AG04450 (cell line): ENCODE measurements at regions of chr4 and their contacts with region 1.

Region 1: DNA sequence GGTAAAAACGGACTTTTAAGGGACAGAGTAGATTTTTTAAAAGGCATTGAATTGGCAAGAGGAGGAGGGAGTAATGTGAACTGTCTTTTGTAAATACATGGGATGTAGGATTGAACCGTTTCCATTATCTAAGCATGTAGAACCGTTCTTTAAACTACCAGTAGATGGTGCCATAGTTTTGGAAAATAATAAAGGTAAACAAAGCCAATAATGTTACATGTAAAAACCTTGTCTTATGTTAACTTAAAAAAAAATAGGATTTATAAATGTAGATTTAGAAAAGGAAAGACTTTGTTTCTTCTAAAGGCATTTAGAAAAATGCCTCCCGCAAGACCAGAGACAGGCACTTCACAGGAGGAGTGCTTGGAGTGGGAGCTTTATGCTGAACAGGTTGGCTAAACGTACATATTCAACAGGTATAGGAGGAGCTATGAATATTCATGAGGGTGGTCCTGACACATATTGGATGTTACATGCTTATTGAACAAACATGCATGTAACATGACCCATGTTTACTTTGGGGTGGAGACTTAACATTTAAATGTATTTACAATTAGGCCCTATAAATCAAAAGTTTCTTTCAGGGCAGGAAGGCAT is 45.5 kb upstream of the FAM241A start:
- DNase-seq: peak; percentile 42
- H3K4me3 ChIP-seq: no peak overlapping the region
- H3K27ac ChIP-seq: no peak overlapping the region
- H3K27me3 ChIP-seq: peaks cover 5% of the 10 kb centered on the region
- CTCF ChIP-seq: peak; percentile 66

Region 2: GRCh38 chr4:112141366-112142138 is 41.8 kb after region 1 on chr4:
- CTCF ChIA-PET with region 1: interaction called, 13 read pairs
- POLR2A ChIA-PET with region 1: no interaction called
- DNase-seq: no peak
- H3K4me3 ChIP-seq: no peak overlapping the region
- H3K27ac ChIP-seq: no peak overlapping the region
- H3K27me3 ChIP-seq: no peaks in the 10 kb centered on the region
- CTCF ChIP-seq: no peak

Region 3: GRCh38 chr4:112231779-112232713 is 132.2 kb after region 1 on chr4 and contains the start of gene AP1AR:
- CTCF ChIA-PET with region 1: interaction called, 166 read pairs
- POLR2A ChIA-PET with region 1: no interaction called
- DNase-seq: no peak
- H3K4me3 ChIP-seq: peak within 1 kb of the TSS; percentile 87
- H3K27ac ChIP-seq: peak within 1 kb of the TSS; percentile 94
- H3K27me3 ChIP-seq: no peaks in the 10 kb centered on the region
- CTCF ChIP-seq: peak; percentile 50
- polyA plus RNA-seq, gene AP1AR: 7.6 and 11.8 TPM in 2 replicates

Region 4: DNA sequence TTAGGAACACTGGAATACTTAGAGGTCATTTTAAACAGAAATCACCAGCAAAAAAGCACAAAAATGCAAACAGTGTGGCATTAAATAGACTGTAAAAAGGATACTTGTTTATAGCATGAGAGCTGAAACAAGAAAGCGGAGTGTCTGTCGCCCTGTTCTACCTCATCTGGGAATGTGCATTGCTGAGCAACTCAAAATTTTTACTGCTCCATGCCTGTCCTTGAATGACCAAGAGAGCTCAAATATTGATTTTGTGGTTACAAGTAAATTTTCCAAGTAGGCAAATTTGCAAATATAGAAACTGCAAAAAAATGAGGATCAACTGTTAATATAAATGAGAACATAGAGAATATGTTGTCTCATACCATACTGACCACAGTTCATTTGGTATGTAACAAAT is 157.3 kb after region 1 on chr4:
- CTCF ChIA-PET with region 1: interaction called, 14 read pairs
- POLR2A ChIA-PET with region 1: no interaction called
- DNase-seq: no peak
- H3K4me3 ChIP-seq: no peak overlapping the region
- H3K27ac ChIP-seq: no peak overlapping the region
- H3K27me3 ChIP-seq: no peaks in the 10 kb centered on the region
- CTCF ChIP-seq: no peak

Region 5: GRCh38 chr4:112279025-112279881 is 179.5 kb after region 1 on chr4:
- CTCF ChIA-PET with region 1: interaction called, 15 read pairs
- POLR2A ChIA-PET with region 1: no interaction called
- DNase-seq: no peak
- H3K4me3 ChIP-seq: no peak overlapping the region
- H3K27ac ChIP-seq: no peak overlapping the region
- H3K27me3 ChIP-seq: no peaks in the 10 kb centered on the region
- CTCF ChIP-seq: no peak

Region 6: GRCh38 chr4:112604589-112604988 is 504.8 kb after region 1 on chr4:
- CTCF ChIA-PET with region 1: interaction called, 10 read pairs
- POLR2A ChIA-PET with region 1: no interaction called
- DNase-seq: peak; percentile 13
- H3K4me3 ChIP-seq: no peak overlapping the region
- H3K27ac ChIP-seq: no peak overlapping the region
- H3K27me3 ChIP-seq: no peaks in the 10 kb centered on the region
- CTCF ChIP-seq: peak; percentile 78